ENCODE measurements at regions of chr11 and their contacts with region 1.

Region 1: GRCh38 chr11:67364783-67365722 is 8.3 kb downstream of the CLCF1 start:
- DNase-seq: no peak
- H3K4me3 Mint-ChIP-seq: no peak overlapping the region
- H3K27ac Mint-ChIP-seq: no peak overlapping the region
- H3K4me1 Mint-ChIP-seq: peaks cover 23% of the 10 kb centered on the region
- H3K27me3 Mint-ChIP-seq: peaks cover 77% of the 10 kb centered on the region

Region 2: DNA sequence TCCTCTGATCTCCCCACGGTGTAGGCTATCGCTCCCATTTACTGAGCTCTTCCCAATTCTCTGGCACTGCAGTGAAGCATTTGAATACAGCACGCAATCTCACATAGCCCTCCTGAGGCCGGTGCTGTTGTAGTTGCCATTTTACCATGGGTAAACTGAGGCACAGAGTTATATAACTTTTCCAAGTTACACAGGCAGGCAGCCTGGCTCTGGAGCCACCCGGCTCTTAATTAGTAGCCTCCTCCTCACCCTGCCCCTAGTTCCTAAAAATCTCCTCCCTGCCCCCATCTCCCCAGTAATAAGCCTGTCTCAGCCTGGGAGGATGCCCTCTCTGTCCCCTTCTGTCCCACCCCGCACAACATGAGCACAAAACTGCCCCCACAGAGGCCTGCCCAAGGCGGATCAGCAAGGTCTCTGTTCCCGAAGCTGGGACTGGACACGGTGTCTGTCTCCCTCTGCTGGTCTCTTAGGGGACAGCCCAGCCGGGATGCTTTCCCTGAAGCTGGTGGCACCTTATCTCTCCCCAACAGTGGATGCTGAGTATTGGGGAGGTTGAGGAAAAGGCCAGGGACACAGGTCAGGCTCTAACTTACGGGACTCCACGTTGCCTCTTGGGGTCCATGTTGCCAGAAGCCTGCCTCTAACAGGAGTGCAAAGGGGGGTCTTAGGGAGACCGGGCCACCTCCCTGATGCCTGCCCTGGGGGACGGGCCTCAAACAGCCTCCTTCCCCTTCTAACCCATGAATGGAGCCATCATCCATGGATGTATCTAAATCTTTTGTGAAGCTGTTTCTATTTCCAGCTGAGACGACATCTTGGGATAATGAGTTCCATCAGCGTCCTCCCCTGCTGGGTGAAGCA is 17.5 kb after region 1 on chr11:
- CTCF ChIA-PET with region 1: interaction called, 46 read pairs
- DNase-seq: peak; percentile 90
- H3K4me3 Mint-ChIP-seq: no peak overlapping the region
- H3K27ac Mint-ChIP-seq: no peak overlapping the region
- H3K4me1 Mint-ChIP-seq: peaks cover 3% of the 10 kb centered on the region
- H3K27me3 Mint-ChIP-seq: peaks cover 81% of the 10 kb centered on the region